CD14-positive monocyte (primary cell): ENCODE measurements at regions of chr19 and their contacts with region 1.

Region 1: GRCh38 chr19:2151339-2152229 is at the start of gene AP3D1:
- DNase-seq: peak; percentile 99 to 100 (median 100)
- H3K4me3 ChIP-seq: peak within 1 kb of the TSS; percentile 84 to 99 (median 90)
- H3K4me3 Mint-ChIP-seq: peak within 1 kb of the TSS; percentile 86 to 90
- H3K27ac ChIP-seq: peak within 1 kb of the TSS; percentile 87 to 90
- H3K27ac Mint-ChIP-seq: peak within 1 kb of the TSS; percentile 91 to 97 (median 94)
- H3K4me1 ChIP-seq: peaks cover 40 to 41% of the 10 kb centered on the region in 2 donors
- H3K4me1 Mint-ChIP-seq: peaks cover 40% of the 10 kb centered on the region
- H3K27me3 ChIP-seq: no peaks in the 10 kb centered on the region
- H3K27me3 Mint-ChIP-seq: peaks cover 0 to 3% (median 0%) of the 10 kb centered on the region in 3 donors
- CTCF ChIP-seq: no peak
- polyA plus RNA-seq, gene AP3D1: 9.6 to 105 (median 12.4) TPM

Region 2: GRCh38 chr19:1896508-1896907 is 255.1 kb before region 1 on chr19:
- intact Hi-C with region 1: no loop called
- DNase-seq: no peak
- H3K4me3 ChIP-seq: peak overlapping the region in 1 of 3 experiments; percentile 57
- H3K4me3 Mint-ChIP-seq: peak overlapping the region in 1 of 2 donors; percentile 26
- H3K27ac ChIP-seq: peak overlapping the region; percentile 79 to 85
- H3K27ac Mint-ChIP-seq: peak overlapping the region; percentile 81 to 99 (median 95)
- H3K4me1 ChIP-seq: peaks cover 49 to 54% of the 10 kb centered on the region in 2 donors
- H3K4me1 Mint-ChIP-seq: peaks cover 47% of the 10 kb centered on the region
- H3K27me3 ChIP-seq: no peaks in the 10 kb centered on the region
- H3K27me3 Mint-ChIP-seq: peaks cover 0 to 5% (median 0%) of the 10 kb centered on the region in 3 donors
- CTCF ChIP-seq: no peak

Region 3: DNA sequence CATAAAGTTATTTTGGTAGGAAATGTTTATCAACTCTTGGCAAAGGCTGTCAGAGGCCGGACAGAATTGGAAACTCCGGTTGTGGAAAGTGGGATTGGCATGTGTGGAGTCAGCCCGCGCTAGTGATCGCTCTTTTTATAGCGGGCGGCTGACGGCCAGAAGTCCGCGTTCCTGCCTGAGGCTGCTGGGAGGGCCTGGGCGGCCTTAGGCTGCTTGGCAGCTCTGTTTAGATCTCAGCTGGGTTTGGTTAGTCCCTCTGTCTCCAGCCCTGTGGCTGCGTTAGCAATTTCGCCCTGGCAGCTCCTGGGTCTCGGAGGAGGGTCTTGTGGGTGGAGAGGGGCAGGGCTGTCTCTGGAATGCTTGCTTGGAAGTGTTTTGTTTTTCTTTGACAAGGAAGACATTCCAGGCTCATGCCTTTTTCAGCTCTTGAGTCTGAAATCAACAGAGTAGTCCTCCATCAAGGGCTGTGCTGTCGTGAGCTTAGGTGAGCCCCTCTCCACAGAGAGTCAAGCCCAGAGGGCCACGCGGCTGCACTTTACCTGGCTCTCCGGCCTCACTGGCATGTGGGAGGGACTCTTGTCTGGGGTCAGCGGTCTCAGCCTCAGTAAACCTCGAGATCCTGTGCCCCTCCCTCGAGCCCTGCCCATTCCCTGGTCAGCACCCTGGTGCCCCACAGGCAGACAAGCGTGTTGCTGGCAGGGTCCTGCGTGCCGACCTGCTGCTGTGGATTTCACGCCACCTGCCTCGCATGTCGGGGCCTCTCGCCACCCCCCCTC is 34.7 kb after region 1 on chr19:
- intact Hi-C with region 1: loop called in 1 of 2 experiments (anchors 5 kb)
- DNase-seq: no peak
- H3K4me3 ChIP-seq: no peak overlapping the region
- H3K4me3 Mint-ChIP-seq: no peak overlapping the region
- H3K27ac ChIP-seq: no peak overlapping the region
- H3K27ac Mint-ChIP-seq: peak overlapping the region in 4 of 7 donors; percentile 35 to 92 (median 66)
- H3K4me1 ChIP-seq: peaks cover 21 to 26% of the 10 kb centered on the region in 2 donors
- H3K4me1 Mint-ChIP-seq: peaks cover 24% of the 10 kb centered on the region
- H3K27me3 ChIP-seq: no peaks in the 10 kb centered on the region
- H3K27me3 Mint-ChIP-seq: peaks cover 0 to 4% (median 2%) of the 10 kb centered on the region in 3 donors
- CTCF ChIP-seq: no peak

Region 4: DNA sequence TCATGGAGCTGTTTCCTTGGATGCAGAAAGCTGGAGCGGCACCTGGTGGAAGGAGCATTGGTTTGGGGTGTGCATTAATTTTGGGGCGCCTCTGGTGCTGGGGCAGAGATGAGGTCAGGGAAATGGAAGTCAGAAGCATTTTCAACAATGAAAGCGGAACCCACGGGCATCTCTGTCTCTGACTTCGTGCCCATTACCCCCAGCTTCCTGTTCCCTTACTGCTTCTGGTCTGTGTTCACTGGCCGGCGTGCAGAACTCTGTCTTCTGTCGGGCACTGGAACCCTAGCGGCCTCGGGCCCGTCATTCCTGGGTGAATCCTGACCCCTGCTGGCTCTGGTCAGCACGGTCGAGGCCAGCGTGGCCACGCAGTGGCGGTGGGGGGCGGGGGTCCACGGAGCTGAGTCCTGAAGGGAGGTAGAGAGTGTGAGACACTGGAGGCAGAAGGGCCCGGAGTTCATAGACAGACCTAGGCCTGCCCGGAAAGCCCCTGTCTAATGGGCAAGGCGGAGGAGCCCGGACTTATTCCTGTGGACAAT is 164.3 kb after region 1 on chr19:
- intact Hi-C with region 1: loop called (anchors 5 kb)
- DNase-seq: peak; percentile 90 to 94 (median 93)
- H3K4me3 ChIP-seq: peak overlapping the region in 1 of 3 experiments; percentile 30
- H3K4me3 Mint-ChIP-seq: peak overlapping the region; percentile 55 to 69
- H3K27ac ChIP-seq: peak overlapping the region; percentile 75 to 78
- H3K27ac Mint-ChIP-seq: peak overlapping the region; percentile 85 to 96 (median 93)
- H3K4me1 ChIP-seq: peaks cover 15 to 21% of the 10 kb centered on the region in 2 donors
- H3K4me1 Mint-ChIP-seq: peaks cover 16% of the 10 kb centered on the region
- H3K27me3 ChIP-seq: peaks cover 0 to 14% of the 10 kb centered on the region in 2 donors
- H3K27me3 Mint-ChIP-seq: peaks cover 13 to 36% (median 29%) of the 10 kb centered on the region in 3 donors
- CTCF ChIP-seq: peak; percentile 81